ENCODE measurements at regions of chr9 and their contacts with region 1.

Region 1: DNA sequence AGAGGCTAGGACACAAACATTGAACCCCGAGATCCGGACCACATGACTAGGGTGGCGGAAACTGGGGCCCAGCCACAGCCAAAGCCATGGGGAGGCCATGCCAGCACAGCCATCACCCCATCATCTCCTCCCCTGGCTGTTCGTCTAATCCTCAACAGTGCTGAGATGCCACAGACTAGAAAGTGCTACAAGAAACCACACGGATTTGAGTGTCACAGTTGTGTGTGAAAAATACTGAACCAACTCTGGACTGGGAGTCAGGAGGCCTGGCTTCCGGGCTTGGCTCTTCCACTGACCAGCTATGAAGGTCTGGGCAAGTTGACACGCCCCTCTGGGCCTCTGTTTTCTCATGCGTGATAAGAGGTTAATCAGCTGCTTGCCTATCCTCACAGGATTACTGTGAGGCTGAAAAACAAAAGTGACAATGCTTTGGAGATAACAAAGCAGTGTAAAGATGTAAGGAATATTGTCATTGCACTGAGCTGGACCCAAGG is 38.8 kb upstream of the SHB start:
- DNase-seq: no peak
- H3K4me3 ChIP-seq: no peak overlapping the region
- CTCF ChIP-seq: no peak

Region 2: GRCh38 chr9:37746848-37747753 is 360.8 kb before region 1 on chr9:
- in situ Hi-C with region 1: loop called (anchors 25 kb)
- DNase-seq: peak; percentile 46
- H3K4me3 ChIP-seq: no peak overlapping the region
- CTCF ChIP-seq: peak; percentile 97

Region 3: DNA sequence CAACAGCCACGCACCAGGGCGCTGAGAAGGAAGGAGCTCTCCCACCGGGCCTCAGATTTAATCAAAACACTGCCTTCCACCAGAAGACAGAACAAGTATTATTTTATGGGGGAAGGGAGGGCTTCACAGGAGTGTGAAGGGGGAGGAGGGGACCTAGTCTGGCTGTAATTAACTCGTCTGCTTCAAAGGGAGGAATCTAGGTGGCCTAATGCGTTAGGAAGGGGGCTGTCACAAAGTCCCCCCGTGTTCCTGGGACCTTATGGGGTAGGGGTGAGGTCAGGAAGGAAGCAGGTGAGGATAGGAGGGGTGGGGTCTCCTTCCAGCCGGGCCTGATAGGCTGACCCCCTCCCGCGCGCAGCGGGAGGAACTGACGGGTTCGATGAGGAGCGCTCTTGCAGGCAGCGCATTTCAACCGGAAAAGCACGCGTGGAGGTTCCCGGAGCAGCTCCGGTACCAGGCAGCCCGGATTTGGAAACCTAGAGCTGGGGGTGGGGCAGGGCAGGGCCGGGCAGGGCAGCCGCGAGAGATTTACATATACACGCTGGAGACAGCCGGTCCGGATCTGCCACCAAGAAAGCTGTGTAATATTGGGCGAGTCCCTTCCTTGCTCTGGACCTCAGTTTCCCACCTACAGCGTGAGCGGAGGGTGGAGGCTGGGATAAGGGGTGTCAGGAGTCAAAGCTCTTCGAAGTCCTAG is 40.8 kb before region 1 on chr9:
- in situ Hi-C with region 1: no loop called
- DNase-seq: no peak
- H3K4me3 ChIP-seq: peak overlapping the region; percentile 87
- CTCF ChIP-seq: no peak

Region 4: DNA sequence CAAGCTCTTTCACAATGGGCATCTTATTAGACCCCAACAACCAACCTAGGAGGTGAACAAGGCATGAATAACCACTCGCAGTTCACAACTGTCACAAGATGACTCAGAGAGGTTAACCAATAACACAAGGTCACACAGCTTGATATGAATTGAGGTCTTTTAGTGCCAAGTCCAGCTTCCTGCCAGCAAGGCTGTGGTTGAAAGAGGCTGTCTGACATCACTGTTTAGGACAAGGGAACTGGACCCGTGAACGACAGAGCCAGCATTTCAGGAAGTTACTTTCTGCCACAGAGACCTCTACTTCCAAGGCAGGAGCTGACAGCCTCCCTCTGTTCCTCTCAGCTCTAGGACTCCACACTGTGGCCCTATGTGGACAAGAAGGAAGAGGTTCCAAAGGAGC is 231.2 kb after region 1 on chr9:
- in situ Hi-C with region 1: loop called (anchors 25 kb)
- DNase-seq: peak; percentile 65
- H3K4me3 ChIP-seq: no peak overlapping the region
- CTCF ChIP-seq: no peak

Measured in astrocyte of the cerebellum (primary cell).